ENCODE measurements at regions of chr2 and their contacts with region 1.

Region 1: DNA sequence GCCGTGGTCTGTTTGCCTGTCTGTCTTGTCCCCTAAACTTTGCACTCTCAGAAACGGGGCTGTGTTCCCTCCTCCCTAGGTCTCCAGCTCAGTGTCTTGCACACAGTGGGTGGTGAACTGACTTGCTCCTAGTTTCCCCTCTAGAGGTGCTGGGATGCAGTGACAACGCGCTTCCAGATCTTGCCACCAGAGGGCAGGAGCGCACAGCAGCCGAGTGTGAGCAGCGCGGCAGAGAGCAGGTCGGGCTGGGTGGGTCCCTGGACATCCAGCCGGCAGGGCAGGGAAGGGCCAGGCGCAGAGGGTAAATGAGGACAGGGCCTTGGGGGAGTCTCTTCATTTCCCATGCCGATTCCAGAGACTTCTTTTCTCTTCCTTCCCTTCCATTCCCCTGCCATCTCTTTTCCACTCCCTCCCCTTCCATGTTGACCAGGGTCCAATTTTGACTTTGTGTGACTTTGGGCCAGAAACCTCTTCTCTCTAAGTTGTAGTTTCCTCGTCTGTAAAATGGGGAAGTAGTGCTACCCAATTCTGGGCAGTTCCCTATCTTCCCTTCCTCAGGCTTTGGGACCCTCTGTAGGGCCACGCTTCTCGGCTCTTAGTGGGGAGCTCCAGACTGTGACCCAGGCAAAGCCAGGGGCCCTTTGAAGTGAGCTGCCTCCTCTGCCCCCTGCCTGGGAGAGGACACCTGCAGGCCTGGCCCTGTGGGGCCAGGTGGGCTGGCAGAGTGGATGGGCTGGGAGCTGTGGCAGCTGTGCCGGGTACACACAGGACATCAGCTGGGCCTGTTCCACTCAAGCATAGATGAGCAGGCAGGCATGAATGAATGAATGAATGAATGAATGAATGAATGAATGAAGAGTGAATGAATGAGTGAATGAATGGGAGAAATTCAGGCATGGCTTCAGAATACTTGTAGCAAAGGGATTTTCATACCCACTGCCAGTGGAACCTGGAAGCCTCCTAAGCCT is 43.3 kb upstream of the TAF1B start:
- DNase-seq: peak; percentile 93
- H3K4me3 Mint-ChIP-seq: no peak overlapping the region
- H3K27ac Mint-ChIP-seq: no peak overlapping the region
- H3K4me1 Mint-ChIP-seq: peaks cover 11% of the 10 kb centered on the region
- H3K27me3 Mint-ChIP-seq: no peaks in the 10 kb centered on the region

Region 2: GRCh38 chr2:9778012-9778411 is 21.9 kb before region 1 on chr2:
- CTCF ChIA-PET with region 1: interaction called, 24 read pairs
- intact Hi-C with region 1: no loop called
- DNase-seq: peak; percentile 42
- H3K4me3 Mint-ChIP-seq: no peak overlapping the region
- H3K27ac Mint-ChIP-seq: no peak overlapping the region
- H3K4me1 Mint-ChIP-seq: peaks cover 40% of the 10 kb centered on the region
- H3K27me3 Mint-ChIP-seq: no peaks in the 10 kb centered on the region

Region 3: GRCh38 chr2:9789371-9789968 is 10.5 kb before region 1 on chr2:
- CTCF ChIA-PET with region 1: interaction called, 24 read pairs
- intact Hi-C with region 1: no loop called
- DNase-seq: no peak
- H3K4me3 Mint-ChIP-seq: no peak overlapping the region
- H3K27ac Mint-ChIP-seq: no peak overlapping the region
- H3K4me1 Mint-ChIP-seq: peaks cover 3% of the 10 kb centered on the region
- H3K27me3 Mint-ChIP-seq: no peaks in the 10 kb centered on the region

Measured in activated naive CD4-positive, alpha-beta T cell treated with anti-CD3 and anti-CD28 coated beads for 36 hours (primary cell).